ENCODE measurements at regions of chr16 and their contacts with region 1.

Region 1: DNA sequence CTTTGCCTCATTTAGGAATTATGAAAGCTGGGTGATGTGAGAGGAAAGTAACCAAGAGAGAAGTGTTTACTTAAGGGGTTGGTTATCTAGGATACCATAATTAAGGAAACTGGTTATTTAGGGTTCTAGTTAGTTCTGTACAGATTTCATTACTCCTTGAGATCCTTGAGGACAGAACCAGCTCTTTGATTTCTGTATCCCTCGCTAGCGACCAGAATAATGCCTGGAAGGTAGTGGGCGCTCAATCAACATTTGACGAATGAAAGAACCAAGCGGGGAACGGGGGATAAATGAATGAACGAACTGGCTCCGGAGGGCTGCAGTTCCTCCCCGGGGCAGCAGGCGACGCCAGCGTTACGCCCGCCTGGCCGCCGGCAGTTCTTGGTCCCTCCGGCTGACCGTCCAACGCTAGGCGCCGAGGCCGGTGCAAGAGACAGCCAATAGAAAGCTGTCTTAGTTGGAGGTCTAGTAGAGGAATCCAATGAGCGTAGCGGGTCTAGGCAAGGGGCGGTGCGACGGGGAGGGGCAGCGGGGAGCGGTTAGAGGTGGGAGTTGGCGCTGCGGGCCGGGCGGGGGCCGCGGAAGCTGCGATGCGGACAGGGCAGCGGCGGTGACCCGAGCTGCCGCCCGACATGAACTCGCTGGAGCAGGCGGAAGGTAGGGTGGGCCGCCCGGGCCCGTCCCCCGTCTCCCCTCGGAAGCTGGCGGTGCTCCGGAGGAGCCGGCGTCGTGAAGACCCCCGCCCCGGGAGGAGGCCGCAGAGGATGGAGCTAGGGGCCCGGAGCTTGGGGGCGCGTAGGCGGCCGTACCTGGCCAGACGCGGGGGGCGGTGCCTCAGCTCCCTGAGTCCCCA is at the start of gene CNEP1R1:
- DNase-seq: peak; percentile 95
- H3K4me3 Mint-ChIP-seq: peak within 1 kb of the TSS; percentile 96
- H3K27ac Mint-ChIP-seq: peak within 1 kb of the TSS; percentile 87
- H3K4me1 Mint-ChIP-seq: peaks cover 29% of the 10 kb centered on the region
- H3K27me3 Mint-ChIP-seq: peaks cover 5% of the 10 kb centered on the region
- total RNA-seq, gene CNEP1R1: 30.1 to 36.1 TPM

Region 2: GRCh38 chr16:49876716-49877129 is 148.2 kb before region 1 on chr16:
- CTCF ChIA-PET with region 1: no interaction called
- POLR2A ChIA-PET with region 1: no interaction called
- DNase-seq: peak; percentile 41
- H3K4me3 Mint-ChIP-seq: no peak overlapping the region
- H3K27ac Mint-ChIP-seq: no peak overlapping the region
- H3K4me1 Mint-ChIP-seq: no peaks in the 10 kb centered on the region
- H3K27me3 Mint-ChIP-seq: peaks cover 28% of the 10 kb centered on the region

Region 3: GRCh38 chr16:49899991-49900695 is 124.8 kb before region 1 on chr16:
- CTCF ChIA-PET with region 1: no interaction called
- POLR2A ChIA-PET with region 1: no interaction called
- DNase-seq: no peak
- H3K4me3 Mint-ChIP-seq: no peak overlapping the region
- H3K27ac Mint-ChIP-seq: no peak overlapping the region
- H3K4me1 Mint-ChIP-seq: no peaks in the 10 kb centered on the region
- H3K27me3 Mint-ChIP-seq: no peaks in the 10 kb centered on the region

Region 4: DNA sequence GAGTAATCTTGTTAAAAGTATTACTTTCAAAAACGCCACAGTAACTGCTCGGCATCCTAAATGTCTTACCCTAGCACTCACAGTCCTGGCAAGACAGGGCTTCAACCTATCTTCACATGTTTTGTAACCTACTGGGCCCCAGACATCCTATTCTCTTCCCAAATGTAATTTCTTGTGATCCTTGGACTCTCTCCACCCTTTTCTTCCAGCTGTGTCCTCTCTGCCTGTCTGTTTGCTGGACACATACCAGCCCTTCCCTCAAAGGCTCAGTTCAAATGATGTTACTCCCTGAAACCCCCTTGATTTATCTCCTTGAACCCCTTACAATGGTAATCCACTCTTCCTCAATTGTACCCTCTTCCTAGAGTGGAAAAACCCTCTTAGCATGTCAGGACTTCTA is 59.9 kb before region 1 on chr16:
- CTCF ChIA-PET with region 1: no interaction called
- POLR2A ChIA-PET with region 1: no interaction called
- DNase-seq: no peak
- H3K4me3 Mint-ChIP-seq: no peak overlapping the region
- H3K27ac Mint-ChIP-seq: no peak overlapping the region
- H3K4me1 Mint-ChIP-seq: no peaks in the 10 kb centered on the region
- H3K27me3 Mint-ChIP-seq: peaks cover 31% of the 10 kb centered on the region

Region 5: DNA sequence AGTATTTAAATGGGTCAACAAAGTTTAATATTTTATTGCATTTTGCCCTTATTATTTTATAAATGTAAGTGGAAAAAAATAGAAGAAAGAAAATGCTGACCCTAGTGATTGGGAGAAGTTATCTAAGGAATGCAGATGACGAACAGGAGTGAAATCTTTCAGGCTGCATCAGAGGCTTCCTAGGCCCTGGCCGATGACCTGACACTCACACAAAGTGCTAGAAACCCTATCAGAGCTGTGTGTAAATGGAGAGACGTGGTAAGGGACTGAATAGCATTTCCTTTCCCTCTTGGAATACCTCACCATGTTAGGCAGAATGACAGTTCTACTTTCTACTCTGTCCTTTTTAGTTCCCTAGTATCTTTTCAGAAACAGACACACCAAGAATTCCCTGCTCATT is 44.7 kb before region 1 on chr16:
- CTCF ChIA-PET with region 1: no interaction called
- POLR2A ChIA-PET with region 1: no interaction called
- DNase-seq: no peak
- H3K4me3 Mint-ChIP-seq: no peak overlapping the region
- H3K27ac Mint-ChIP-seq: no peak overlapping the region
- H3K4me1 Mint-ChIP-seq: peaks cover 3% of the 10 kb centered on the region
- H3K27me3 Mint-ChIP-seq: peaks cover 9% of the 10 kb centered on the region

Region 6: GRCh38 chr16:50059111-50059510 is 34.2 kb after region 1 on chr16:
- CTCF ChIA-PET with region 1: interaction called, 80 read pairs
- POLR2A ChIA-PET with region 1: interaction called, 37 read pairs
- DNase-seq: no peak
- H3K4me3 Mint-ChIP-seq: no peak overlapping the region
- H3K27ac Mint-ChIP-seq: no peak overlapping the region
- H3K4me1 Mint-ChIP-seq: no peaks in the 10 kb centered on the region
- H3K27me3 Mint-ChIP-seq: peaks cover 4% of the 10 kb centered on the region

Region 7: DNA sequence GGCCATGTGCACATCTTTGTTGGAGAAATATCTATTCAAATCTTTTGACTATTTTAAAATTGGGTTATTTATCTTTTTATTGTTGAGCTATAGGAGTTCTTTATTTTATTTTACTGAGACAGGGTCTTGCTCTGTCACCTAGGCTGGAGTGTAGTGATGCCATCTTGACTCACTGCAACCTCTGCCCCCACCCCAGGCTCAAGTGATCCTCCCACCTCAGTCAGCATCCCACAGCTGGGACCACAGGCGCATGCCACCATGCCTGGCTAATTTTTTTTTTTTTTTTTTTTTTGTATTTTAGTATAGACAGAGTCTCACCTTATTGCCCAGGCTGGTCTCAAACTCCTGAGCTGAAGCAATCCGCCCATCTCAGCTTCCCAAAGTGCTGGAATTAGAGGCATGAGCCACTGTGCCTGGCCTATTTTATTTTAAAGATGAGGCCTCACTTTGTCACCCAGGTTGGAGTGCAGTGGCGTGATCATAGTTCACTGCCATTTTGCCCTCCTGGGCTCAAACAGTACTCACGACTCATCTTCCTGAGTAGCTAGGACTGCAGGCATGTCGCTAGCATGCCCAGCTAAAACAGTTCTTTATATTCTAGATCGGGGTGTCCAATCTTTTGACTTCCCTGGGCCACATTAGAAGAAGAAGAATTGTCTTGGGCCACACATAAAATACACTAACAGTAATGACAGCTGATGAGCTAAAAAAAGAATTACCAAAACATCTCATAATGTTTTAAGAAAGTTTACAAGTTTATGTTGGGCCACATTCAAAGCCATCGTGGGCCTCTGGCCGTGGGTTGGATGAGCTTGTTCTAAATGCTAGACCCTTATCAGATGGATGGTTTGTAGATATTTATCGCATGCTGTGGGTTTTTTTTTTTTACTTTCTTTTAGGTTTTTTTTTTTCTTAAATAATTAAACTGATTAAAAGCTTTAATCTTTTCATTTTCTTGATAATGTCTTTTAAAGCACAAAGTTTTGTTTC is 141.9 kb after region 1 on chr16:
- CTCF ChIA-PET with region 1: interaction called, 14 read pairs
- POLR2A ChIA-PET with region 1: no interaction called
- DNase-seq: no peak
- H3K4me3 Mint-ChIP-seq: no peak overlapping the region
- H3K27ac Mint-ChIP-seq: peak overlapping the region; percentile 71
- H3K4me1 Mint-ChIP-seq: peaks cover 39% of the 10 kb centered on the region
- H3K27me3 Mint-ChIP-seq: no peaks in the 10 kb centered on the region

Region 8: GRCh38 chr16:50326949-50327402 is 302.1 kb after region 1 on chr16:
- CTCF ChIA-PET with region 1: interaction called, 21 read pairs
- POLR2A ChIA-PET with region 1: interaction called, 7 read pairs
- DNase-seq: peak; percentile 82
- H3K4me3 Mint-ChIP-seq: no peak overlapping the region
- H3K27ac Mint-ChIP-seq: peak overlapping the region; percentile 85
- H3K4me1 Mint-ChIP-seq: peaks cover 72% of the 10 kb centered on the region
- H3K27me3 Mint-ChIP-seq: no peaks in the 10 kb centered on the region

Region 9: DNA sequence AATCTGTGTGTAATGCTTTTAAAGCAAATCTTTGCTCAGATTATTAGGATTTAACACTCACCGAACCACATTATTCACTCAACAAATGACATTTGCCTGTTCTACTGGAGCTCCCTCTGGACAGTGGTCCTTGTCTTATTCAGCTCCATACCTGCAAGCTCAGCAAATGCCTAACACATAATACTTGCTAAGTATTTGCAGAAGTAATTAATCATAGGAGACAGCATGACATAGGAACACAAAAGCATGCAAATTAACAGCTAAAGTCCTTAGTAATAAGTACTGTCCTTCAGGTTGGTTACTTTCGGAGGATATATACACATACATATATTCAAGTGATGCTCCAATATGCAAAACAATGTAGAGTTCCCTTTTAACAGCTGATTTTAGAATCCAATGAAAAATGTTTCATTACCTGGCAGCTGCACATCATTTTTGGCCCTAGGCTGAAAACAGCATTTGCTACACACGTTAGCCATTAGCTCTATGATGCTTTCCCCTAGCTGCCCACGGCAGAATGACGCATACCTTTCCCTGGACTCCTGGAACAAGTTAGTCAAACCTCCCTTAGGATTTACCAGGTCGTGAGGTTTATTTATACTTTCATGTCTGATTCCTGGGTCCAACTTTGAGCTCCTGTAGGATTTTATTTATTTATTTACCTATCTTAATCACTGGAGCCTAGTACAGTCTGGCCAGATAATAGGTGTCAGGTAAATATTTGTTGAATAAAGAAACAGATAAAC is 335.3 kb after region 1 on chr16:
- CTCF ChIA-PET with region 1: interaction called, 15 read pairs
- POLR2A ChIA-PET with region 1: interaction called, 3 read pairs
- DNase-seq: no peak
- H3K4me3 Mint-ChIP-seq: no peak overlapping the region
- H3K27ac Mint-ChIP-seq: no peak overlapping the region
- H3K4me1 Mint-ChIP-seq: peaks cover 41% of the 10 kb centered on the region
- H3K27me3 Mint-ChIP-seq: no peaks in the 10 kb centered on the region